ENCODE measurements at regions of chr2 and their contacts with region 1.

Region 1: GRCh38 chr2:29075894-29076705 is 1.8 kb upstream of the PCARE start:
- DNase-seq: peak; percentile 53 to 95 (median 73)

Region 2: DNA sequence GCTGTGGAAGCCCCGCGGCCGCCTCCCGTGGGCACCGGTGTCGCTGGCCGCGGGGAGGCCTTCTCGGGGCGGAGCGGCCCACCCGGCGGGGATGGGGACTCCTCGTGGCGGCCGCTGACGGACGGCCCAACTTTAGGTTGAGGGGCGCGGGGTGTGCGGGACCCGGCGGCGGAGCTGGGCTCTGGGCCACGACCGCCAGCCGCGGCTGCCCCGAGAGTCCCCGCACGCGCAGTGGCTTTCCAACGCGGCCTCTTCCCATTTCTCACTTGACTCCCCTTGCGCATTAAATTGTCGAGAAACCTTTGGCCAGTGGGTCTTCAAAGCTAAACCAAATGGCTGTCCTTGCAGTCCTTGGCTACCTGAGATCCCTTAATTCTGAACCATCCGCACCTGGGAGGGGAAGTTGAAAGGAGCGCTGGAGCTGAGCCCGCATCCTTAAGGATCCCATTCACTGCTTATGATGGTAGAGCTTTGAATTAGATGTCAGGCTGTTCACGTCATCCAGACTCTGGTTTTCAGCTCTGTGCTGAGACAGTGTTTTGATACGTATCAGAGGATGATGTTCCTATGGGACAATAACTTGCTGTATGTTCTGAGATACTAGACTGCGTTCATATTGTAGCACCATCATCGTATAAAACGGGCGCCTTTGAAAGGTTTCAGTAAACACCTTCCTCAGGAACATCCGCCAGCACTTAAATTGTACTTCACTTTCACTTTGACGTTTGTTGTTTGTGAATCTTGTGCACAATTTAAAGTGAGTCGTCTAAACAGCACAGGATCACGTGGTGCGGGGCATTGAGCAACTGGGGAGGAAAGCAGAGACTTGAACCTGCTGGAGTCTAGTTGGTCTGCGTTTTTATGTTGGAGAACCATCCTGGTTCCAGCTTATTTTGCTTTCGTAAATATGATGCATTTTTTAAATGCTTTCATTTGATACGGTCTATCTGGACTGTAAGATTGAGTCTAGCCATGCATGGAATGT is 40.0 kb after region 1 on chr2:
- intact Hi-C with region 1: loop called (anchors 5 kb)
- DNase-seq: peak; percentile 43 to 92 (median 64)